WTC11 (cell line): ENCODE measurements at regions of chr12 and their contacts with region 1.

Region 1: DNA sequence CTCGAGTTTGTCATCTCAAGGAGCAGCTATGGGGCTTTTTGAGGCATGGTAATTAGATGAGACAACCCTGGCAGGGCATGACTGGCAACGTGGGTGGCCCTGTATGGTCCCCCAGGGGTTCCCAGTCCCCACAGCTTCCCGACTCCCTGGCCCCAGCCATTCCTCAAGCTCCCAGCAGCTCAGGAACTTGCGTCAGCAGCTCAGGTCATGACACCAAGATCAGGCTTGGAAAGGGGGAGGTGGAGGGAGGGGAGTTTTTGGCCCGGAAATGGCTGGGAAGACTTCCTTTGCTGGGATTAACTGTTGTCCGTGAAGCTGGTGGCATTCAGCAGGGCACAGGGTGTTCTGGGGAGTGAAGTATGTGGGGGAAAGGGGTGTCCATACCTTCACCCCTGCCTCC is 10.4 kb upstream of the NRIP2 start:
- DNase-seq: no peak
- ATAC-seq: no peak
- H3K4me3 Mint-ChIP-seq: no peak overlapping the region
- H3K27ac Mint-ChIP-seq: no peak overlapping the region
- H3K4me1 Mint-ChIP-seq: peaks cover 15% of the 10 kb centered on the region
- H3K27me3 Mint-ChIP-seq: no peaks in the 10 kb centered on the region
- CTCF ChIP-seq: no peak

Region 2: GRCh38 chr12:2794736-2795289 is 50.5 kb before region 1 on chr12 and contains the start of gene FKBP4:
- CTCF ChIA-PET with region 1: interaction called, 10 read pairs
- POLR2A ChIA-PET with region 1: interaction called, 4 read pairs
- DNase-seq: peak; percentile 93
- ATAC-seq: peak; percentile 85
- H3K4me3 Mint-ChIP-seq: peak within 1 kb of the TSS; percentile 84
- H3K27ac Mint-ChIP-seq: no peak within 1 kb of the TSS
- H3K4me1 Mint-ChIP-seq: peaks cover 36% of the 10 kb centered on the region
- H3K27me3 Mint-ChIP-seq: no peaks in the 10 kb centered on the region
- CTCF ChIP-seq: no peak
- total RNA-seq, gene FKBP4: 245 to 257 TPM (median 249 TPM) in 3 replicates

Region 3: GRCh38 chr12:2834581-2835491 is 10.4 kb before region 1 on chr12 and contains the start of gene NRIP2:
- CTCF ChIA-PET with region 1: interaction called, 45 read pairs
- POLR2A ChIA-PET with region 1: no interaction called
- DNase-seq: peak; percentile 51
- ATAC-seq: peak; percentile 67
- H3K4me3 Mint-ChIP-seq: peak within 1 kb of the TSS; percentile 24
- H3K27ac Mint-ChIP-seq: no peak within 1 kb of the TSS
- H3K4me1 Mint-ChIP-seq: peaks cover 16% of the 10 kb centered on the region
- H3K27me3 Mint-ChIP-seq: no peaks in the 10 kb centered on the region; the same call in none of the 2 replicates
- CTCF ChIP-seq: no peak
- total RNA-seq, gene NRIP2: 0.09 TPM in 1 of 3 replicates, not detected in the others

Region 4: DNA sequence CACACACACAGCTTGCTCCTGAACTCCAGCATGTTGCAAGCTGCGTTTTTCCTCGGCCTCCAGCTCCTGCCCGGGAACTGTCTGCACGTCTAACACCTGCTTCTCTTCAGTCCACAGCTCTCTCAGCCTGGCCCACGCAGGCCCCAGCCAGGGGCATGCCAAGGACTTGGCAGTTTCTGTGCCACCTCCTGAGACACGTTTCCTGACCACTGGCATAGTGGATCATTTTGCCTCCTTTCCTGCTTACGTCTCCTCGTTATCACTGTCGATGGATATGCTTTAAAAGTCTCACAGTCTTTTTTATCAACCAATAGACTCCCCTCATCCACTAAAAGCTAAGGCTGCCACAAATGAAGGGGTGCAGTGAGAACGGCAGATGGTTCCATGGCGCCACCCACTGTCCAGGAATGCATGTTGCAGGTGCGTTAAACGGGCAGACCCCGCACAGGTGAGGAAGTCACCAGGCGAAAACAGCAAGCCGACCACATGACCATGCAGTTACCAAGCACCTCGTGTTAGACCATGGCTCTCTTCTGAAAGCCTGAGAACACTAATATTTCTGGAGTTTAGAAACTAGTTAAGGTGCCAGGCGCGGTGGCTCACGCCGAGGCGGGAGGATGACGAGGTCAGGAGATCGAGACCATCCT is 99.2 kb after region 1 on chr12:
- CTCF ChIA-PET with region 1: interaction called, 47 read pairs
- POLR2A ChIA-PET with region 1: no interaction called
- DNase-seq: peak; percentile 90
- ATAC-seq: peak; percentile 98
- H3K4me3 Mint-ChIP-seq: no peak overlapping the region
- H3K27ac Mint-ChIP-seq: peak overlapping the region; percentile 3; the same call in 1 of the 2 replicates
- H3K4me1 Mint-ChIP-seq: peaks cover 3% of the 10 kb centered on the region
- H3K27me3 Mint-ChIP-seq: peaks cover 3% of the 10 kb centered on the region; the same call in 1 of the 2 replicates
- CTCF ChIP-seq: peak; percentile 87

Region 5: DNA sequence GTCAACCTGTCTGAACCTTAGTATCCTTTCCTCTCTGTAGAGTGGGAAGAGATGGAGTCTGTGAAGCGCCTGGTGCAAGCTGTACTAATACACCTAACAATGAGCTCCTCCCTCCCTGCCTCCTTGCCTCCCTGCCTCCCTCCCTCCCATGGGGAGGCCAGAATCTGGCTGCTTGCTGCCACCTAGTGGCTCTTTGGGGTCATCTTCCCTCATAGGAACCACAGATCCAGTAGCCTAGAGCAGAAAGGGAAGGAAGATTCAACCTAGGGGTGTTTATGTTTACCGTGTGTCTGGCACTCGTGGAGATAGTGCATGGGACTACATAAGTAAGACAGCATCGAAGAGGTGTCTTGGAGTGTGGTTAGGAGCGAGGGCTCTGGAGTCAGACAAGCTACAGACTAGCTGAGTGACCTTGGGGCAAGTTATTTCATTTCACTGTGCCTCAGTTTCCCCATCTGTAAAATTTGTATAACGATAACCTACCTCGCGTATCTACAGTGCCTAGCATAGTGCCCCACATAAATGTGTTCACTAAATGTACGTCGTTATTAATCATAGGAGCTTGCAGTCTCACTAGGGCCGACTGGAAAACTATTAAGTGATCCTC is 196.4 kb after region 1 on chr12:
- CTCF ChIA-PET with region 1: interaction called, 35 read pairs
- POLR2A ChIA-PET with region 1: no interaction called
- DNase-seq: peak; percentile 76
- ATAC-seq: peak; percentile 68
- H3K4me3 Mint-ChIP-seq: no peak overlapping the region
- H3K27ac Mint-ChIP-seq: 0 out of 2 replicates have a peak overlapping the region, but pooled peaks have one; percentile 19
- H3K4me1 Mint-ChIP-seq: peaks cover 4% of the 10 kb centered on the region; the same call in 1 of the 2 replicates
- H3K27me3 Mint-ChIP-seq: no peaks in the 10 kb centered on the region
- CTCF ChIP-seq: peak; percentile 62; the same call in 1 of the 2 replicates

Region 6: DNA sequence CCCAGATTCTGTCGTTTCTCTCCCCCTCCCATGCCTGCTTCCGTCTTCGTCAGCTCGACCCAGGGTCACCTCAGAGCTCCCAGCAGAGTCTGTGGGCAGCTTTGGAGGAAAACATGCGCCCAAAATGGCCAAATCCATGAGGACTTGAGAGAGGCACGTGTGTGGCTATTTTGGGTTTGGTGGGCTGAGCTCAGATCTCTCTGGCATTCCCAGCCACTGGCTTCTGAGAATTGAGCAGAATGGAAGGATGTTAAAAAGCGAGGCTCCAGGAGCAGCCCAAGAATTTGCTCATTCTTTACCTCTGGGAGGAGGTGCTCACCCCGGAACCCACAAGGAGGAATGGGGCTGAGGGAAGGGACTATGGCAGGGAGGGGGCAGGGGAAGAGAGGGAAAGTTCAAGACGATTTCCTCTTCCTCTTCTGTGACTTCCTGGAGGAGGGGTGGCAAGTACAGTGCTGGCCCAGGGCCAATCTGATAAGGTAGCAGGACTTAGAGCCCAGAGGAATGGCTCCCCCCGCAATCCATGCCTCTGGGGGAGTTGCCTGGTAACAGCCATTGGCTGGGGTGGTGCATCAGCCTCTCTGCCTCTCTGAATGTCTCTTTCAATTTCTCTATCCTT is 252.0 kb after region 1 on chr12:
- CTCF ChIA-PET with region 1: no interaction called
- POLR2A ChIA-PET with region 1: no interaction called
- DNase-seq: no peak
- ATAC-seq: peak; percentile 24; the same call in 1 of the 2 replicates
- H3K4me3 Mint-ChIP-seq: no peak overlapping the region
- H3K27ac Mint-ChIP-seq: peak overlapping the region; percentile 56
- H3K4me1 Mint-ChIP-seq: peaks cover 9% of the 10 kb centered on the region
- H3K27me3 Mint-ChIP-seq: no peaks in the 10 kb centered on the region; the same call in 1 of the 2 replicates
- CTCF ChIP-seq: no peak